ENCODE measurements at regions of chr20 and their contacts with region 1.

Region 1: GRCh38 chr20:57838670-57839151 is 128.9 kb upstream of the PMEPA1 start:
- DNase-seq: no peak
- H3K4me3 ChIP-seq: no peak overlapping the region
- H3K27ac ChIP-seq: no peak overlapping the region
- H3K4me1 ChIP-seq: no peaks in the 10 kb centered on the region
- H3K27me3 ChIP-seq: no peaks in the 10 kb centered on the region
- CTCF ChIP-seq: no peak

Region 2: DNA sequence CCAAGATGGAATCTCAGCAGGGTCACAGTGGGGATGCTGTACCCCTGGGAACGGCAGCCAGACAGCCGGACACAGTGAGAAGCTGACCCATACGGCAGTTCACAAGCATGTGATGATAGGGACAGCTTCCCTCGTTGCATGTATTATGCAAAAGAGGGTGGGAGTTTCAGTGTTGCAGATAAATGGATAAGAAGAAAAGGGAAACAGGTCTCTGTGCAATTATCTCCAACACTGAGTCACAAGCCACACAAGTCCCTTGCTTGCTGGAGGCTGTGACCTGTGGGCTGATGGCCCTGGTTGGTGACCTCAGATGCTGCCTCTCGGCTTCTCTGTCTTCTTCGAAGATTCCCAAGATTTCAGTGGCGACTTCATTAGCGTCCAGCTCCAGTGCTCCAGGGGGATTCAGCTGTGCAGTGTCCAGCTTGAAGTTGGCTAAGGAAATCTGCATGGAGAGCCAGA is 529.9 kb before region 1 on chr20:
- CTCF ChIA-PET with region 1: no interaction called
- dilution Hi-C with region 1: no loop called
- in situ Hi-C with region 1: no loop called
- intact Hi-C with region 1: no loop called
- DNase-seq: no peak
- H3K4me3 ChIP-seq: no peak overlapping the region
- H3K27ac ChIP-seq: no peak overlapping the region
- H3K4me1 ChIP-seq: no peaks in the 10 kb centered on the region
- H3K27me3 ChIP-seq: no peaks in the 10 kb centered on the region
- CTCF ChIP-seq: no peak

Region 3: GRCh38 chr20:57879779-57880570 is 41.3 kb after region 1 on chr20:
- CTCF ChIA-PET with region 1: no interaction called
- dilution Hi-C with region 1: loop called (anchors 5 kb)
- in situ Hi-C with region 1: no loop called
- intact Hi-C with region 1: no loop called
- DNase-seq: no peak
- H3K4me3 ChIP-seq: no peak overlapping the region
- H3K27ac ChIP-seq: no peak overlapping the region
- H3K4me1 ChIP-seq: no peaks in the 10 kb centered on the region
- H3K27me3 ChIP-seq: peaks cover 8% of the 10 kb centered on the region
- CTCF ChIP-seq: no peak